Activated CD4-positive, alpha-beta T cell treated with anti-CD3 and anti-CD28 coated beads for 36 hours (primary cell): ENCODE measurements at regions of chr7 and their contacts with region 1.

Region 1: DNA sequence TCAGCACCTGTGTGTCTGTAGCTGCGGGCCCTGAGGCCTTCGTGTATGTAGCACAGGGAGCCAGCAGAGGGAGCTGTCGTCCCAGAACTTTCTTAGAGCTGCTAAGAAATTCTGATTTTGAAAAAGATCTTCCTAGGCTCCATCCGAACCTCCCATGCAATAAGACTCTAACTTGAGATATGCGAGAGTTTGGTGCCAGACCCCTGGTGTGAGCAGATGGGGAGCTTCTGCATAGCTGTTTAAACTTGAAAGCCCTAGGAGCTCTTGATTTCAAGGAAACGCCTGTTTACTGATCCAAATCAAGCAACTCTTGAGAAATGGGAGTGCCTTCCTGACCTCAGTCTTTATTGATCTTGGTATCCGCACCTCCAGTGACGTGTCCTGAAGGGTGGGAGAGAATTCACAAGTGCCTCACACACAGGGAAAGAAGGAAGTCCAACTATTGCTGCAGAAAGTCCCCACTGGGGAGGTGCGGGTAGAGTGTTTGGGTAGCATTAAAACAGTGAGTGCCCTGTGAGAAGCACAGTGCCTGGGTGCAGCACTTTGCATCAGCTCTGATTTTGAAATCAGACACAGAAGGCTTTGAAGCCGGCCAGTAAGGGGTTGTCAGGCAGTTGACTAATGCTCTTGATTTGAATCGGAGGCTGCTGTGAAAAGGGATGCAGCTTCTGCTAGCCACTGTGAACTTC is 66.4 kb upstream of the STRIP2 start:
- DNase-seq: peak; percentile 92
- ATAC-seq: peak; percentile 89
- H3K4me3 Mint-ChIP-seq: peak overlapping the region; percentile 57
- H3K27ac Mint-ChIP-seq: peak overlapping the region; percentile 95
- H3K4me1 Mint-ChIP-seq: peaks cover 38% of the 10 kb centered on the region
- H3K27me3 Mint-ChIP-seq: no peaks in the 10 kb centered on the region

Region 2: GRCh38 chr7:129343099-129343700 is 24.6 kb before region 1 on chr7:
- CTCF ChIA-PET with region 1: interaction called, 27 read pairs
- POLR2A ChIA-PET with region 1: no interaction called
- intact Hi-C with region 1: loop called in 1 of 2 experiments (anchors 1 kb)
- DNase-seq: peak; percentile 9
- ATAC-seq: peak; percentile 36
- H3K4me3 Mint-ChIP-seq: no peak overlapping the region
- H3K27ac Mint-ChIP-seq: no peak overlapping the region
- H3K4me1 Mint-ChIP-seq: peaks cover 29% of the 10 kb centered on the region
- H3K27me3 Mint-ChIP-seq: no peaks in the 10 kb centered on the region

Region 3: DNA sequence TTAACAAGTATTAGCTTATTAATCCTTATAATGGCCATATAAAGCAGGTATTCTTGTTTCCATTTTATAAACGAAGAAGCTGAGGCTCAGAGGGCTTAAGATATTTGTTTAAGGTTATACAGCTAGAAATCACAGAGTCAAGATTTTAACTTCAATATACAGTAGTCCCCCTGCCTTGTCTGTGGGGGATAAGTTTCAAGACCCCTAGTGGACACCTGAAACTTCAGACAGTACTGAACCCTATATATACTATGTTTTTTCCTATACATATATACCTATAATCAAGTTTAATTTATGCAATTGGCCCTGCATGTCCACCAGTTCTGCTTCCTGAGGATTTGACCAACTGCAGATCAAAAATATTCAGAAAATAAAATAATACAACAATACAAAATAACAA is 22.0 kb after region 1 on chr7:
- CTCF ChIA-PET with region 1: interaction called, 17 read pairs
- POLR2A ChIA-PET with region 1: no interaction called
- intact Hi-C with region 1: no loop called
- DNase-seq: no peak
- ATAC-seq: no peak
- H3K4me3 Mint-ChIP-seq: no peak overlapping the region
- H3K27ac Mint-ChIP-seq: no peak overlapping the region
- H3K4me1 Mint-ChIP-seq: peaks cover 9% of the 10 kb centered on the region
- H3K27me3 Mint-ChIP-seq: no peaks in the 10 kb centered on the region

Region 4: DNA sequence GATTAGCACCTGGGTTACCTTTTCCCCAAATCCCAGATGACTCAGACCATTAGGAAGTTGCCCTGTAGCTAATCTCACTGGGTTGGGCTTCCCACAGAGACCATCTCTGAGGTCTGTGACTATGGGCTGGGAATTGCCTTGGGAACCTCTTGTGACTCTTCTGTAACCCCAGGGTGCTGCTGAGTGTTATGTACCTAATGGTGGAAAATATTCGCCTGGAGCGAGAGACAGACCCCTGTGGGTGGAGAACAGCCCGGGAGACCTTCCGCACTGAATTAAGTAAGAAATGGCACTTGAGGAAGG is 86.4 kb after region 1 on chr7:
- CTCF ChIA-PET with region 1: interaction called, 11 read pairs
- POLR2A ChIA-PET with region 1: no interaction called
- intact Hi-C with region 1: no loop called
- DNase-seq: no peak
- ATAC-seq: no peak
- H3K4me3 Mint-ChIP-seq: no peak overlapping the region
- H3K27ac Mint-ChIP-seq: no peak overlapping the region
- H3K4me1 Mint-ChIP-seq: no peaks in the 10 kb centered on the region
- H3K27me3 Mint-ChIP-seq: no peaks in the 10 kb centered on the region

Region 5: DNA sequence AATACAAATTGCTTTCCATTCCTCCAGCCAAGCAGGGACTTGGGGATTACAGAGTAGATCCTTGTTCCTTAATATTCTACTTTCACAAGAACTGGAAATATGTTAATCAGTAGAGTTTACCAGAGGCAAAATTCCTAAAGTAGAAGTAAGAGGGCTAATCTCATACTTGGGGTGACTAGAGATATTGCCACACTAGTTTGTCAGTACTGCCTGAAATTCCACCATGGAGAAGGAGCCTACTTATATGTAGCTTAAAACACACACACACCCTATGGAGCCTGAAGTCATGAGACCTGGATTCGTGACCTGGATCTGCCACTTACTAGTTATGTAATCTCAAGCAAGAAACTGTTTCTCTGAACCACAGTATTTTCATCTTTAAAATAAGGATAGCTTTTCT is 100.2 kb after region 1 on chr7:
- CTCF ChIA-PET with region 1: interaction called, 79 read pairs
- POLR2A ChIA-PET with region 1: no interaction called
- intact Hi-C with region 1: loop called (anchors 1 kb)
- DNase-seq: no peak
- ATAC-seq: no peak
- H3K4me3 Mint-ChIP-seq: no peak overlapping the region
- H3K27ac Mint-ChIP-seq: no peak overlapping the region
- H3K4me1 Mint-ChIP-seq: peaks cover 16% of the 10 kb centered on the region
- H3K27me3 Mint-ChIP-seq: no peaks in the 10 kb centered on the region

Region 6: GRCh38 chr7:129635300-129636029 is 267.6 kb after region 1 on chr7:
- CTCF ChIA-PET with region 1: interaction called, 10 read pairs
- POLR2A ChIA-PET with region 1: no interaction called
- intact Hi-C with region 1: loop called (anchors 2 to 5 kb)
- DNase-seq: peak; percentile 84
- ATAC-seq: peak; percentile 97
- H3K4me3 Mint-ChIP-seq: no peak overlapping the region
- H3K27ac Mint-ChIP-seq: peak overlapping the region; percentile 65
- H3K4me1 Mint-ChIP-seq: peaks cover 37% of the 10 kb centered on the region
- H3K27me3 Mint-ChIP-seq: no peaks in the 10 kb centered on the region

Region 7: GRCh38 chr7:130010689-130011412 is 643.0 kb after region 1 on chr7:
- CTCF ChIA-PET with region 1: interaction called, 15 read pairs
- POLR2A ChIA-PET with region 1: no interaction called
- intact Hi-C with region 1: no loop called
- DNase-seq: peak; percentile 94
- ATAC-seq: peak; percentile 85
- H3K4me3 Mint-ChIP-seq: no peak overlapping the region
- H3K27ac Mint-ChIP-seq: peak overlapping the region; percentile 88
- H3K4me1 Mint-ChIP-seq: peaks cover 12% of the 10 kb centered on the region
- H3K27me3 Mint-ChIP-seq: no peaks in the 10 kb centered on the region